CD8-positive, alpha-beta memory T cell (primary cell): ENCODE measurements at regions of chr15 and their contacts with region 1.

Region 1: GRCh38 chr15:89057504-89058133 is 30.6 kb upstream of the ABHD2 start:
- DNase-seq: peak; percentile 70 to 84 (median 71)
- H3K4me3 ChIP-seq: no peak overlapping the region
- H3K4me3 Mint-ChIP-seq: no peak overlapping the region
- H3K27ac ChIP-seq: no peak overlapping the region
- H3K27ac Mint-ChIP-seq: no peak overlapping the region
- H3K4me1 ChIP-seq: peaks cover 4% of the 10 kb centered on the region
- H3K4me1 Mint-ChIP-seq: peaks cover 6 to 10% (median 9%) of the 10 kb centered on the region in 3 donors
- H3K27me3 ChIP-seq: no peaks in the 10 kb centered on the region
- H3K27me3 Mint-ChIP-seq: peaks cover 2 to 5% of the 10 kb centered on the region in 2 donors

Region 2: GRCh38 chr15:88791637-88792036 is 266.0 kb before region 1 on chr15:
- CTCF ChIA-PET with region 1: no interaction called
- POLR2A ChIA-PET with region 1: no interaction called
- DNase-seq: no peak
- H3K4me3 ChIP-seq: no peak overlapping the region
- H3K4me3 Mint-ChIP-seq: no peak overlapping the region
- H3K27ac ChIP-seq: no peak overlapping the region
- H3K27ac Mint-ChIP-seq: no peak overlapping the region
- H3K4me1 ChIP-seq: no peaks in the 10 kb centered on the region
- H3K4me1 Mint-ChIP-seq: no peaks in the 10 kb centered on the region
- H3K27me3 ChIP-seq: no peaks in the 10 kb centered on the region
- H3K27me3 Mint-ChIP-seq: peaks cover 11 to 50% of the 10 kb centered on the region in 2 donors

Region 3: GRCh38 chr15:89087830-89088604 is 30.4 kb after region 1 on chr15 and contains the start of gene ABHD2:
- CTCF ChIA-PET with region 1: interaction called, 11 read pairs
- POLR2A ChIA-PET with region 1: no interaction called
- DNase-seq: peak; percentile 94 to 98 (median 97)
- H3K4me3 ChIP-seq: peak within 1 kb of the TSS; percentile 80
- H3K4me3 Mint-ChIP-seq: no peak within 1 kb of the TSS
- H3K27ac ChIP-seq: peak within 1 kb of the TSS; percentile 62
- H3K27ac Mint-ChIP-seq: peak within 1 kb of the TSS; percentile 4 to 97 (median 92)
- H3K4me1 ChIP-seq: peaks cover 33% of the 10 kb centered on the region
- H3K4me1 Mint-ChIP-seq: peaks cover 32 to 37% (median 33%) of the 10 kb centered on the region in 3 donors
- H3K27me3 ChIP-seq: no peaks in the 10 kb centered on the region
- H3K27me3 Mint-ChIP-seq: peaks cover 0 to 1% of the 10 kb centered on the region in 2 donors
- total RNA-seq, gene ABHD2: 68.7 to 79.8 TPM

Region 4: GRCh38 chr15:89129123-89129815 is 71.7 kb after region 1 on chr15:
- CTCF ChIA-PET with region 1: interaction called, 41 read pairs
- POLR2A ChIA-PET with region 1: interaction called, 3 read pairs
- DNase-seq: peak; percentile 26 to 61 (median 47)
- H3K4me3 ChIP-seq: no peak overlapping the region
- H3K4me3 Mint-ChIP-seq: no peak overlapping the region
- H3K27ac ChIP-seq: no peak overlapping the region
- H3K27ac Mint-ChIP-seq: peak overlapping the region in 1 of 8 donors; percentile 1
- H3K4me1 ChIP-seq: peaks cover 13% of the 10 kb centered on the region
- H3K4me1 Mint-ChIP-seq: peaks cover 12 to 34% (median 26%) of the 10 kb centered on the region in 3 donors
- H3K27me3 ChIP-seq: no peaks in the 10 kb centered on the region
- H3K27me3 Mint-ChIP-seq: no peaks in the 10 kb centered on the region

Region 5: GRCh38 chr15:89171136-89172072 is 113.8 kb after region 1 on chr15:
- CTCF ChIA-PET with region 1: interaction called, 21 read pairs
- POLR2A ChIA-PET with region 1: no interaction called
- DNase-seq: peak in 3 of 5 donors; percentile 7 to 10 (median 9)
- H3K4me3 ChIP-seq: no peak overlapping the region
- H3K4me3 Mint-ChIP-seq: no peak overlapping the region
- H3K27ac ChIP-seq: no peak overlapping the region
- H3K27ac Mint-ChIP-seq: no peak overlapping the region
- H3K4me1 ChIP-seq: no peaks in the 10 kb centered on the region
- H3K4me1 Mint-ChIP-seq: peaks cover 5 to 9% (median 7%) of the 10 kb centered on the region in 3 donors
- H3K27me3 ChIP-seq: no peaks in the 10 kb centered on the region
- H3K27me3 Mint-ChIP-seq: no peaks in the 10 kb centered on the region

Region 6: GRCh38 chr15:89177633-89178306 is 120.2 kb after region 1 on chr15:
- CTCF ChIA-PET with region 1: interaction called, 35 read pairs
- POLR2A ChIA-PET with region 1: no interaction called
- DNase-seq: peak; percentile 45 to 70 (median 51)
- H3K4me3 ChIP-seq: no peak overlapping the region
- H3K4me3 Mint-ChIP-seq: no peak overlapping the region
- H3K27ac ChIP-seq: no peak overlapping the region
- H3K27ac Mint-ChIP-seq: peak overlapping the region in 2 of 8 donors; percentile 31 to 58
- H3K4me1 ChIP-seq: no peaks in the 10 kb centered on the region
- H3K4me1 Mint-ChIP-seq: peaks cover 3 to 6% (median 5%) of the 10 kb centered on the region in 3 donors
- H3K27me3 ChIP-seq: no peaks in the 10 kb centered on the region
- H3K27me3 Mint-ChIP-seq: no peaks in the 10 kb centered on the region